Right ventricle myocardium superior (tissue), 1 donor: ENCODE measurements at regions of chr10 and their contacts with region 1.

Region 1: DNA sequence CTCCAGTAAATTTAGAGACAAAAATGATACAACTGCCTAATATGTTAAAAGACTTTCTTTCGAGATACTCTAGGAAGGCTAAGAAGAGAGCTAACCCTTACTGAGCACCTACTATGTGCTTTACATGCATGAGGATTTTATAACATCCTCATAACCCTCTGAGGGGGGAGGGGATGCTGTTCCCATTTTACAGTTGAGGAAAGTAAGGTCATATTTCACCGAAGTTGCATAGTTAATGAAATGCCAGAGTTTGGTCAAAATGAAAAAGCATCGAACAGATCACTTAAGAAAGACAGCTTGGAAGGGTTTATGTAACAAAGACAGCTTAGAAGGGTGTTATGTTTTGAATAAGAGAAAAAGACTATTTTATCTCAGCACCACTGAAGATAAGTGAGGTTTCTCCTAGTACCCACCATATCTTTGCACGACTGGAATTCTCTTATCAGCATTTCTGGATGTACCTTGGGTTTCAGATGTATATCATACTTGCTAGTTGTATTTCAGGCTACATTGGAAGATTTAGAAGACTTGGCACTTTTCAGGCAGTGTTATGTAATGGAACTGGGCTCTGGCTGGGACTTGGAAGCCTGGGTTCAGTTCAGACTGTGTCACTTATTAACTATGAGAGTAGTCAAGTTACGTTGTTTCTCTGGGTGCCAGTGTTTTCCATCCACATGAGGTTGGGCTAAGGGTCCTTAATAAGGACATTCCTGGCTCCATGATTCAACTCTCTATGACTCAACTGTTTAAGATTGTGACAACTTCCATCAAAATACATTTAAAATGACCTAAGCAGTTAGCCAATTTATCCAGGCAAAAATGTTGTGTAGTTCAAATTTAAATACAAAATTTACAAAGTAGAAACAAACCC is 6.0 kb downstream of the RHOBTB1 start:
- DNase-seq: no peak
- ATAC-seq: no peak

Region 2: DNA sequence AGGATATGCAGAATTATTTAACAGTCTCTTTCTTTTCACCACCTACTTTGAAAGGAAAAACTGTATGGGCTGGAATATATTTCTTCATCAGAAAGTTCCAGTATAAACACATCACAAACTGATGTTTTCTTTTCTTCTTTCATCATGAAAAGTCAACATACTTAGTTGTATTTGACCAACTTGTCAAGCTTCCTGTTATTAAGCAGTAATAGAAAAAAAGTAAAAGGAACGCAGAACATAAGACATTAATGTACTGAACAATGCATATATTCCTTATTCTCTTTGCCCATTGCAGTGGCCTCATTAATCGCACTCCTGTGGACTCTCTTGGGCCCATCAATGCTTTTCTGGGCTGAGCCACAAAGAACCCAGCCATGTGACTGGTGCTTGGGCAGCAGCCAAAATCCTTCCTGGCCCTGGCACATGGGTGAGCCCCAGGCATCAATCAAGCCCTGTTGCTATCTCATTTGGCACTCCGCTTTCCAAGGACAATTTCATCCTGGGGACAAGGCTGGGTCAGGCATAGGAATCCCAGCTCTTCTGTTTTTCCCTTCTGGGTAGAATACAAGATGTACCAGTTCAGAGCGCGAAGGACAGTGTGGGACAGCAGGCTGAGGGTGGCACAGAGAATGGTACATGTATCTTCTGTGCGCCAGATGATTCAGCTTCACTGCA is 36.3 kb before region 1 on chr10:
- intact Hi-C with region 1: loop called (anchors 5 kb)
- DNase-seq: peak; percentile 84
- ATAC-seq: peak; percentile 92